HCT116 (cell line): ENCODE measurements at regions of chr15 and their contacts with region 1.

Region 1: GRCh38 chr15:68672781-68673205 is 94.0 kb downstream of the CORO2B start:
- DNase-seq: no peak
- ATAC-seq: no peak
- H3K4me3 ChIP-seq: no peak overlapping the region
- H3K27ac ChIP-seq: no peak overlapping the region
- H3K4me1 ChIP-seq: peaks cover 0 to 18% of the 10 kb centered on the region in 2 experiments; a peak in 2 of 4 replicates
- H3K27me3 ChIP-seq: no peaks in the 10 kb centered on the region
- CTCF ChIP-seq: peak in 2 of 3 experiments; percentile 21 to 27; a peak in 2 of 6 replicates
- POLR2A ChIP-seq: no peak
- RAD21 ChIP-seq: peak; percentile 52

Region 2: DNA sequence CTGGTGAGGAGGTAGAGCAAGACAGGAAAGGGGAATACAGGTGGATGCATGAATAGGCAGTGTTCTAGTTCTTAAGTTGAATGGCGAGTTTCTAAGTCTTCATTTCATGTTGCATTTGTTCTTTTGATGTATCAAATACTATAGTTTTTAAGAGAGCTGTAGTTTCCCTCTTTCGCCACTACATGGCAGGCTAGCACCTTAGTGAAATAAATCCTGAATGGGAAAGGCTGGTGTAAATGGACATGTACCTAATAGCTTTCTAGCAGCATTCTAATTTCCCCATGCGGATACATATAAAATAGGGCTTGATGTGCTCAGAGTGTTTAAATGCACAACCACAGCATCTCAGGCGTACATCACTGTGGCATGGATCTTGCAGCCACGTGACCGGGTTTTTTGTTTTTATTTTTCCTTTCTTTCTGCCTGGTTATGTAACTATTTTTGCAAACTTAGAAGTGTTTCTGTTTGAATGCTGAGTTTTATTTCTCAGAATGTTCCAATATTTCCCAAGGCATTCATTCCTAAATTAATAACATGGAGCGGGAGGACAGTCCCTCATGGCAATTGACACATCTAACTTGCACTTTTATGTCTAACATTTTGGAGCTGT is 419.8 kb before region 1 on chr15:
- CTCF ChIA-PET with region 1: interaction called, 13 read pairs
- POLR2A ChIA-PET with region 1: no interaction called
- RAD21 ChIA-PET with region 1: interaction called in 1 of 2 experiments, 3 read pairs
- intact Hi-C with region 1: no loop called
- DNase-seq: peak; percentile 79
- ATAC-seq: peak; percentile 97
- H3K4me3 ChIP-seq: no peak overlapping the region
- H3K27ac ChIP-seq: no peak overlapping the region
- H3K4me1 ChIP-seq: no peaks in the 10 kb centered on the region
- H3K27me3 ChIP-seq: no peaks in the 10 kb centered on the region
- CTCF ChIP-seq: peak; percentile 78 to 88 (median 87)
- POLR2A ChIP-seq: no peak
- RAD21 ChIP-seq: peak; percentile 90

Region 3: DNA sequence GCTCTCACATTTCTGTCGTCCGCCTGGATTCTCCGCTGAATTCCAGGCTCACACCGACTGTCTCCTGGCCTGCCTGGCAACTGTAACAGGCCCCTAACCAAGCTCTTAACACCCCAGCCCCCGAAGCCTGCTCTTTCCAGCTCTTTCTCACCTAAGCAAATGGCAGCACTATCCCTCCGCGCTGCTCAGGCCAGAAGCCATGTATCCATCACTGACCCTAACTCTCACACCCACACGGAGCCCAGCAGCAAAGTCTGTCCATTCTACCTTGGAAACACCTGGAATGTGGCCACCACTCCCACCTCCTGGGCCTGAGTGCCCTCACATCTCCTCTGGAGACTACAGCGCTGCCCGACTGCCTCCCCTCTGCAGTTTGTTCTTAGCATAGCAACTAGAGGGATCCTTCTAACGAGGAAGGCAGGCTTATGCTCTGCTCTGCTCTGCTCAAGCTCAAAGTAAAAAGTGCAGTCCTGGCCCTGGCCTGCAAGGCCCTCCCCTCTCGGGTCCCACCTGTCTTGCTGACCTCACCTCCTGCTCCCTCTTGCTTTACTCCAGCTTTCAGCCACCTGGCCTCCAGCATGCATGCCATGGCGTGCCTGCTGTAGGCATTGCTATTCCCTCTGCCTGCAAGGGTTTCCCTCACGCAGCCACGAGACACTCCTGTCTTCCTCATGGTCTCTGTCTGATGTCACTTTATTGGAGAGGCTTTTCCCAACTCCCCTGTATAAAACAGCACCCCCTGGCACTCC is 368.0 kb before region 1 on chr15:
- CTCF ChIA-PET with region 1: interaction called, 15 read pairs
- POLR2A ChIA-PET with region 1: no interaction called
- RAD21 ChIA-PET with region 1: interaction called in 1 of 2 experiments, 4 read pairs
- intact Hi-C with region 1: loop called (anchors 1 kb)
- DNase-seq: no peak
- ATAC-seq: no peak
- H3K4me3 ChIP-seq: no peak overlapping the region
- H3K27ac ChIP-seq: no peak overlapping the region
- H3K4me1 ChIP-seq: peaks cover 0 to 33% of the 10 kb centered on the region in 2 experiments; a peak in 3 of 4 replicates
- H3K27me3 ChIP-seq: no peaks in the 10 kb centered on the region
- CTCF ChIP-seq: no peak
- POLR2A ChIP-seq: no peak
- RAD21 ChIP-seq: no peak

Region 4: GRCh38 chr15:68559345-68560310 is 113.2 kb before region 1 on chr15:
- CTCF ChIA-PET with region 1: interaction called, 98 read pairs
- POLR2A ChIA-PET with region 1: interaction called, 3 read pairs
- RAD21 ChIA-PET with region 1: interaction called, 23 to 28 read pairs
- intact Hi-C with region 1: loop called (anchors 1 kb)
- DNase-seq: peak; percentile 56
- ATAC-seq: peak; percentile 97
- H3K4me3 ChIP-seq: peak overlapping the region; percentile 44 to 56
- H3K27ac ChIP-seq: no peak overlapping the region
- H3K4me1 ChIP-seq: peaks cover 0 to 15% of the 10 kb centered on the region in 2 experiments; a peak in 2 of 4 replicates
- H3K27me3 ChIP-seq: no peaks in the 10 kb centered on the region
- CTCF ChIP-seq: peak; percentile 85 to 92 (median 92)
- POLR2A ChIP-seq: no peak
- RAD21 ChIP-seq: peak; percentile 91

Region 5: DNA sequence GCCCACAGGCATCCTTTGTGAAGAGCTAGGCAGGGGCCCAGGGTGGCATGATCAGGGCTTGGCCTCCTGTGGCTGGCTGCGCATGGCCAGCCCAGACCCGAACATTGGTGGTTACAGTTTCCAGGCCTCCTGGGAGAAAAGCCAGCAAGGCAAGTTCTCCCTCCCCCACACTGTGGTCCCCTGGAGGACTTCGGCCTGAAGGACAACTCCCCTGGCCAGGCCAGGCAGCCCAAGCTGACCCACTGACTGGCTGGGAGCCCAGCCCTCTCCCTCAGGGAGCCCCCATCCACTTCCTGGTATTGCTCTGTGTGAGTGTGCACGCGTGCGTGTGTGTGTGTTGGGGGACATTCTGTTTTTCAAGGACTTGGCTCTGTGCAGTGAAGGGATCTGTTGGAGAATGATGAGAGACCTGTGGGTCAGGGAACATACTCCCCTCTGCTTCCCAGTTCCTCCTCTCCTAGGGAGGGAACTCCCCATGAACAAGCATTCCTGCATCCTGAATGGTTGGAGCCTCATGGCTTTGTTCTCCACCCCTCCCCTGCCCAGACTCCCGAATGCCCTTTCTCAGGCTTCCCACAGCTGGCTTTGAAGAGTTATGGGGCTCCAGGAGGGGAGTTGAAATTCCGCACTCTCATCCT is 64.5 kb before region 1 on chr15:
- CTCF ChIA-PET with region 1: no interaction called
- POLR2A ChIA-PET with region 1: no interaction called
- RAD21 ChIA-PET with region 1: no interaction called
- intact Hi-C with region 1: no loop called
- DNase-seq: no peak
- ATAC-seq: no peak
- H3K4me3 ChIP-seq: no peak overlapping the region
- H3K27ac ChIP-seq: no peak overlapping the region
- H3K4me1 ChIP-seq: peaks cover 13 to 20% of the 10 kb centered on the region in 2 experiments
- H3K27me3 ChIP-seq: no peaks in the 10 kb centered on the region
- CTCF ChIP-seq: no peak
- POLR2A ChIP-seq: no peak
- RAD21 ChIP-seq: no peak

Region 6: DNA sequence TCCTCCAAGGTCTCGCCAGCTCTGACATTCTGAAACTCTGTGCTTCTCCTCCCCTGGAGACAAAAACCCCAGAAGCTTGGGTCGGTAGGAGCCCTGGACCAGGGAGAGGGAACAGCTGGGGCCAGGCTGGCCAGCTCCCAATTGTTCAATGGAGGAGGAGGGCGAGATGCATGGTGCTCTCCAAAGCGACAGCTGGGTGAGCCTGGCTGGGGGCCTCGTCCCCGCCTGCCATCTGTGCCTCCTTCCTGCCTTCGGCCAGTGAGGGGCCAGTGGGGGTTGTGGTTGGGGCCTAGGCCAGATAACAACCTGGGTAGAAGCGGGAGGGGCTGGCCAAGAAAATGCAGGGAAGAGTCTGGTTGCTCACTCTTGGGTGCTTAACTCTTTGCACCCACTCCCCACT is 14.6 kb before region 1 on chr15:
- CTCF ChIA-PET with region 1: interaction called, 13 read pairs
- POLR2A ChIA-PET with region 1: no interaction called
- RAD21 ChIA-PET with region 1: no interaction called
- intact Hi-C with region 1: no loop called
- DNase-seq: no peak
- ATAC-seq: no peak
- H3K4me3 ChIP-seq: no peak overlapping the region
- H3K27ac ChIP-seq: no peak overlapping the region
- H3K4me1 ChIP-seq: no peaks in the 10 kb centered on the region
- H3K27me3 ChIP-seq: no peaks in the 10 kb centered on the region
- CTCF ChIP-seq: no peak
- POLR2A ChIP-seq: no peak
- RAD21 ChIP-seq: no peak

Region 7: GRCh38 chr15:68691705-68692104 is 18.9 kb after region 1 on chr15:
- CTCF ChIA-PET with region 1: interaction called, 10 read pairs
- POLR2A ChIA-PET with region 1: no interaction called
- RAD21 ChIA-PET with region 1: no interaction called
- intact Hi-C with region 1: no loop called
- DNase-seq: no peak
- ATAC-seq: peak; percentile 65
- H3K4me3 ChIP-seq: no peak overlapping the region
- H3K27ac ChIP-seq: no peak overlapping the region
- H3K4me1 ChIP-seq: peaks cover 6 to 19% of the 10 kb centered on the region in 2 experiments; a peak in 3 of 4 replicates
- H3K27me3 ChIP-seq: no peaks in the 10 kb centered on the region
- CTCF ChIP-seq: no peak
- POLR2A ChIP-seq: no peak
- RAD21 ChIP-seq: no peak

Region 8: GRCh38 chr15:68875377-68876116 is 202.8 kb after region 1 on chr15:
- CTCF ChIA-PET with region 1: interaction called, 30 read pairs
- POLR2A ChIA-PET with region 1: no interaction called
- RAD21 ChIA-PET with region 1: interaction called, 8 to 9 read pairs
- intact Hi-C with region 1: loop called (anchors 5 kb)
- DNase-seq: peak; percentile 88
- ATAC-seq: peak; percentile 89
- H3K4me3 ChIP-seq: peak overlapping the region; percentile 26 to 48
- H3K27ac ChIP-seq: no peak overlapping the region
- H3K4me1 ChIP-seq: peaks cover 0 to 9% of the 10 kb centered on the region in 2 experiments; a peak in 1 of 4 replicates
- H3K27me3 ChIP-seq: no peaks in the 10 kb centered on the region
- CTCF ChIP-seq: peak; percentile 83 to 88 (median 87)
- POLR2A ChIP-seq: no peak
- RAD21 ChIP-seq: peak; percentile 95